Astrocyte of the cerebellum (primary cell): ENCODE measurements at regions of chrX and their contacts with region 1.

Region 1: DNA sequence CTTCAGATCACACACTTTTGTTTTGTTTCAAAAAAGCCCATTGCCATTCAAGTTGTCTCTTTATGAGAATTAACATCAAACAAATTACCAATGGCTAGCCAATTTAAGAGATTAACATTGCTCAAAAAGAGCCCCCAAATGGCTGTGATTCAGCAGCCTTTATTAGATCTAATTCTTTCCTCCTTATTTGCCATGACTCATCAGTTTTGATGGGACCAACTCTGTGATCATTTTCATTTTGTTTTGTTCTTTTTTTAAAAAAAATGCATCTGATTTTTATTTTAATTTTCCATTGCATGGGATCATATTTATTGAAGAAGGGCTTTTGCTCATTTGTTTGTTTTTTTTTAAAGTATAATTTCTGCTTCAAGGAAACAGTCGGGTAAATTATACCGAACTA is 161.6 kb upstream of the FRMPD4 start:
- DNase-seq: no peak
- H3K4me3 ChIP-seq: no peak overlapping the region
- CTCF ChIP-seq: no peak

Region 2: GRCh38 chrX:11929476-11929875 is 47.2 kb before region 1 on chrX:
- in situ Hi-C with region 1: loop called (anchors 5 kb)
- DNase-seq: no peak
- H3K4me3 ChIP-seq: no peak overlapping the region
- CTCF ChIP-seq: no peak

Region 3: DNA sequence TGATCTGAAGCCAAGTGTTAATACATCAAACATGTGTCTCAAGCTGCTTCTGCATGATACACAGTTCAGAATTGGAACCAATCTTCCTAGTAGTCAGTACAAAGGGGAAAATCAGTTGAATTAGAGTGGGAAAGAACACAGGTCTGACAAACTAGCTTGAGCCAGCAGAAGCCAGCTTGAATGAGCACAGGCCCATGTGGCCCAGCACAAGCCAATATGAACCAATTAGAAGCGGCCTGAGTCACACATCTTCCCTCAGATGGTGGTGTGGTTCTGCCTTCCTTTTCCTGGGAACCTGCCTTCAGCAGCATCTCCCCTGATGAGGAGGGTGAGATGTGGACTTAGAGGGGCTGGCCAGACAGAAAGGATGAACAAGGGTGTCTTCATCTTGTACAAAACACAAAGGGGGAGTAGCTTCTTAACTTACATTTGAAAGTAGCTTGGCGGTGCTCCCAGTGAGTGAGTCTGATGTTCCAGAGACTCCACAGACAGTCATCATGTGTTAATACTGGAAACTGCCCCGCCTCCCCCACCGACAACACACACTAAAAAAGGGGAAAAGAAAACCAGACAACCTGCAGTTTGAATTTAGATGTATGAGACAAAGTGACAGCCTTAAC is 233.6 kb after region 1 on chrX:
- in situ Hi-C with region 1: no loop called
- DNase-seq: peak; percentile 6
- H3K4me3 ChIP-seq: no peak overlapping the region
- CTCF ChIP-seq: no peak